Activated CD4-positive, alpha-beta T cell treated with anti-CD3 and anti-CD28 coated beads for 36 hours (primary cell): ENCODE measurements at regions of chr4 and their contacts with region 1.

Region 1: DNA sequence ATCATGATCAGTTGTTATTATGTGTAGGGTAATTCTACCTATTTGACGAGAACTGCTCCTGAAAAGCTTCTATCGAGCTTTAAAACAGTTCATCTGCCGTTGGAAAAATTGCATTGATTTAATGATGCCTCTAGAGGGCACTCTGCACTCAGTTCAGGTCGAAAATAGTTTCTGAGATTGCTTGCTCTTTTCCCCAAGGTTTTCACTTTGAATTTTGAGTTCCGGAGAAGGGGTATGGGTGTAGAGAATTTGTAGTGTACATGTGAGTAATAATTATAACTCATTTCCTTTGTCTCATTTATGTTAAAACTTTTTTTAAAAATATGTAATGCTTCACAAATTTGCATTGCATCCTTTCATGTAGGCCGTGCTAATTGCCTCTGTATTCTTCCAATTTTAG is 28.4 kb upstream of the TNIP3 start:
- DNase-seq: peak; percentile 27
- ATAC-seq: peak; percentile 50
- H3K4me3 Mint-ChIP-seq: peak overlapping the region; percentile 42
- H3K27ac Mint-ChIP-seq: no peak overlapping the region
- H3K4me1 Mint-ChIP-seq: peaks cover 59% of the 10 kb centered on the region
- H3K27me3 Mint-ChIP-seq: no peaks in the 10 kb centered on the region

Region 2: DNA sequence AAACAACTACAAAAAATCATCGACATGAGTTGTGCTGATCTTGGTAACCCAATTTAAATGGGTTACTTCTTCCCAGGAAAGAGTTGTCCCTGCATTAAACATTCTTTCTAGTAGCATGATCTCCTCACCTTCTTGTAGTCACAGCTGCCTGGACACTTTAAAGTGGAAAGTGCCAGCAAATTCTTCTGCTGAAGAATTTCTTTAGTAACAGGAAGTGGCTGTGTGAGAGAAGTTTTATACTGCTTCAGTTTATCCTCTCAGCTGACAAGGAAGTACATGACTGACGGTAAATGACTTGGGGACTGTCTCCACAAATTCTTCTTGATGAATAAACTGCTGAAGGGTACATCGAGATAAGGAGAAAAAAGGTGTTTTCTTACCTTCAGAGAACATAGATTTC is 10.2 kb before region 1 on chr4:
- CTCF ChIA-PET with region 1: interaction called, 31 read pairs
- POLR2A ChIA-PET with region 1: no interaction called
- intact Hi-C with region 1: loop called in 1 of 2 experiments (anchors 1 kb)
- DNase-seq: peak; percentile 20
- ATAC-seq: peak; percentile 57
- H3K4me3 Mint-ChIP-seq: peak overlapping the region; percentile 73
- H3K27ac Mint-ChIP-seq: peak overlapping the region; percentile 93
- H3K4me1 Mint-ChIP-seq: peaks cover 70% of the 10 kb centered on the region
- H3K27me3 Mint-ChIP-seq: no peaks in the 10 kb centered on the region

Region 3: DNA sequence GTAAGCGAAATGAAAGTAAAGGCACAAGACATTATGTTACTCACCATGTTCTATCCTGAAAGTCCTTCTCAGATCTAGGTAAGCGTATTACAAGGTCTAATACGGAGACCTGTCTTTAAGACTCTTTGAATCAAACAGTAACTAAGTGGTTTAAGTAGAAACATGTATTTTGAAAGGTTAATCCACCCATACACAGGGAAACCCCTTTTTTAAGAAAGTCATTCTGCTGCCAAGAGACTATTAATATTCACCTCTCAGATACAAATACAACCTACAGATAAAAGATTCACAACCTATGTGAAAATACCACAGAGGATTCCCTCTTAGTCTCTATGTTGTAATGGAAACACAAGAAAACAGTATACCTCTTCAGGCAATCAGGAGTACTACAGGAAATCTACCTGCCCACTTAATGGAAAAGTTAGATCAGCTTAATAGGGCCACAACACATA is 34.9 kb after region 1 on chr4:
- CTCF ChIA-PET with region 1: interaction called, 26 read pairs
- POLR2A ChIA-PET with region 1: no interaction called
- intact Hi-C with region 1: loop called (anchors 1 to 2 kb)
- DNase-seq: no peak
- ATAC-seq: peak; percentile 93
- H3K4me3 Mint-ChIP-seq: peak overlapping the region; percentile 62
- H3K27ac Mint-ChIP-seq: peak overlapping the region; percentile 70
- H3K4me1 Mint-ChIP-seq: peaks cover 42% of the 10 kb centered on the region
- H3K27me3 Mint-ChIP-seq: peaks cover 2% of the 10 kb centered on the region

Region 4: DNA sequence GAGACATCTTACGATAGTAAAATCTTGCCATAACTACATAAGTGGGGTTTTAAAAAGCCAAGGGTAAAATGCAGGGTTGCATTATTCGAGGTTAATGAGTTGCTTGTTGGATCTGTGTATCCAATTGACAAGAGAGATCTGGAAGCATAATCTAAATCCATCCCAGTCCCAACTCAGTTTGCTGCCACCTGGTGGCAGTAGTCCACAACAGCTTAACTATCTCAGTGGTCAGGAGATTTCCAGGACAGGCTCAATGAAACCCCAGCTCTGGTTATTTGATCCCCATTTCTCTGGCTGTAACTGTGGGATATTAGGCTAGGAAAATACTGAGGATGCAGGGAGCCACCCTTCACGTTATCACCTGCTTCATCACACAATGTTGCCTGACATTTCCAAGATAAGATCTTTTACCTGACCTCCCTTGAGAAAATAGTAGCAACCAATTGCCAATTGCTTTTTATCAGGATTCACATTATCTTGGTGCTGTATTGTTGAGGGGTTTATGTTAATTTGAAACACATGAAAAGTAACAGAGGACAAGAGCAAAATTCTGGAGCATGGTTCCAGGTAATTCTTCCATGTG is 59.8 kb after region 1 on chr4:
- CTCF ChIA-PET with region 1: interaction called, 53 read pairs
- POLR2A ChIA-PET with region 1: no interaction called
- intact Hi-C with region 1: loop called (anchors 1 kb)
- DNase-seq: peak; percentile 73
- ATAC-seq: no peak
- H3K4me3 Mint-ChIP-seq: no peak overlapping the region
- H3K27ac Mint-ChIP-seq: no peak overlapping the region
- H3K4me1 Mint-ChIP-seq: peaks cover 67% of the 10 kb centered on the region
- H3K27me3 Mint-ChIP-seq: no peaks in the 10 kb centered on the region

Region 5: GRCh38 chr4:121370729-121371325 is 178.3 kb after region 1 on chr4:
- CTCF ChIA-PET with region 1: interaction called, 10 read pairs
- POLR2A ChIA-PET with region 1: no interaction called
- intact Hi-C with region 1: loop called in 1 of 2 experiments (anchors 5 kb)
- DNase-seq: peak; percentile 64
- ATAC-seq: no peak
- H3K4me3 Mint-ChIP-seq: no peak overlapping the region
- H3K27ac Mint-ChIP-seq: no peak overlapping the region
- H3K4me1 Mint-ChIP-seq: no peaks in the 10 kb centered on the region
- H3K27me3 Mint-ChIP-seq: peaks cover 20% of the 10 kb centered on the region